AG04450 (cell line): ENCODE measurements at regions of chr4 and their contacts with region 1.

Region 1: DNA sequence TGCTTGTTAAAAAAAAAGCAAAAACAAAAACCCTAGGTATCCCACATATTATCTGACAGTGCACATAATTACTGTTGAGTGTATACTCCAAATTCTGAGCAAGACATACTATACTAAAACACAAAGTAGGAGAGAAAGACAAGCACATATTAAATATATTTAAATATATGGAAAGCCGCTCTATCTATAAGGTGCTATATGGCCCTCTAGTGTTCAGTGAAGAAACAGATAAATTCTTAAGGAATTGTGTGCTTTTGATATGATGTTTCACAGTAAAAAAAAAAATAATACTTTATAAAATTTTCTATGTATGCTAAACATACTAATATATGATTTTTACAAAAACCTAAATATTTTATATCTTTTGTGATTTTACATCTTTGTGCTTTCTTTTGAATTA is 137.8 kb downstream of the FBXW7 start:
- DNase-seq: no peak
- H3K4me3 ChIP-seq: no peak overlapping the region
- H3K27ac ChIP-seq: no peak overlapping the region
- H3K27me3 ChIP-seq: no peaks in the 10 kb centered on the region
- CTCF ChIP-seq: peak; percentile 62

Region 2: DNA sequence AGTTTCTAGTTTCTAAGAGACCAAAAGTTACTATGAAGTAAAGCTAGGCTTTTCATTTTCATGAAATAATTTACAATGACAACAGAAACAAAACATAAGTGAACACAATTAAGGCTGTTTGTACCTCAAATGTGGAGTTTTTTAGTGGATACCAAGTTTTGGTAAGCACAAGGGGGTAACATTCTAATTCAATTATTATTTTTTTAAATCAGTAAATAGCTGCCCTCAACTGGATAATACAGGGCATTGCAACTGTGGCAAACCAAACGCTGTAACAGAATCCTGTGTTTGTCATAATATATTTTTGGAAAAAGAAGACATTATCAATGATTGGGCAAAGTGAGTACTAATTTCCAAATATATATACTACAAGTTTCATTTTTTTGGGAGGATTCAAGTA is 12.5 kb before region 1 on chr4:
- CTCF ChIA-PET with region 1: interaction called, 11 read pairs
- POLR2A ChIA-PET with region 1: no interaction called
- DNase-seq: no peak
- H3K4me3 ChIP-seq: no peak overlapping the region
- H3K27ac ChIP-seq: no peak overlapping the region
- H3K27me3 ChIP-seq: no peaks in the 10 kb centered on the region
- CTCF ChIP-seq: peak; percentile 66

Region 3: DNA sequence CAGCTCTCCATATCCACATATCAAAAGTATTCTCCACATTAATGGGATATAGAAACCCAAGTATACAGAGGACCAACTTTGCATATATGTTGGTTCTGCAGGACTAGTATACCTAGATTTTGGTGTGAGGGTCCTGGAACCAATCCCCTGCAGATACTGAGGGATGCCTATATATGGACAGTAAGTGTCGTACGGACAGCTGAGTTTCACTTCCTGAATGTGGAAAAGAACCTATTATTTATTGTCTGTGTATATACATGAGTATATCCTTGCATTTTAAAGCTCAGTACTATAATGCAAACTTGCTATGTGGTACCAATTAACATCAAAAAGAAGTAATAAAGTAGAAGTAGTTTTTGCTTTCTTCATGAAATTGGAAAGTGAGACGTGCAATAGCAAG is 36.0 kb after region 1 on chr4:
- CTCF ChIA-PET with region 1: no interaction called
- POLR2A ChIA-PET with region 1: no interaction called
- DNase-seq: no peak
- H3K4me3 ChIP-seq: no peak overlapping the region
- H3K27ac ChIP-seq: no peak overlapping the region
- H3K27me3 ChIP-seq: no peaks in the 10 kb centered on the region
- CTCF ChIP-seq: no peak

Region 4: GRCh38 chr4:152618971-152619370 is 220.9 kb after region 1 on chr4:
- CTCF ChIA-PET with region 1: no interaction called
- POLR2A ChIA-PET with region 1: no interaction called
- DNase-seq: no peak
- H3K4me3 ChIP-seq: no peak overlapping the region
- H3K27ac ChIP-seq: no peak overlapping the region
- H3K27me3 ChIP-seq: peaks cover 9% of the 10 kb centered on the region
- CTCF ChIP-seq: no peak